AG04450 (cell line): ENCODE measurements at regions of chr14 and their contacts with region 1.

Region 1: DNA sequence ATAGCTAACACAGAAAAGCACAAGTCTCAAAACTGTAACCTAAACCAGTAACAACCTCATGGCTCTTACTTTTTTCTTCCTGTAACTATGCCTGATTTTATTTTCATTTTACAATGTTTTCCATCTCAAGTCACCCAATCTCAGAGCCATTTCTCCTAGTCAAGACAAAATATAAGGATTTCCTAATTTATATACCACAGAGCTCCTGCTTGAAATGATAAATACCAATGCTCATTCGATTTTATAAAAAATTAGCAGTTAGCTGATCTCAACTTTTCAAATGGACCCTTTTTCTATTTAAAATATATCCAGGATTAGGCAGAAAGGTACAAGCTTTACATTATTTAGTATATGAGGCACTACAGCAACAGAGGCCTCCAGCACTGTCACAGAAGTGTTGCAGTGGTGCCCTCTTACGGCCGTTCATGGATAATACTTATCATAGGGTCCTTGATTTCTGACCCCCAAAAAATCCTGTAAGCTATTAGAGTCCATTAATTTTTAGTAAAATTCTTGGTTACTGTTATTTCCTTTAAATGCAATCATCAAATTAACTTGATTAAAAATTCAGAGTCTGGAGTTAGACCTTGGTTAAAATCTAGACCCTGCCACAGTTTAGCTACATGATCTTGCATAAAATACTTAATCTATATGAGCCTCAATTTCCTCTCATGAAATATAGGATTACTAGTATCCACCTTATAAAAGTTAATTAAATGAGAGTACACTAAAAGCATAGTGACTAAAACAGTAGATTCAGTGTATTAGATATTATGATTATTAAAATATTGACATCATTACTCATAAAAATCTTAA is 68.3 kb downstream of the SEC23A start:
- DNase-seq: no peak
- H3K4me3 ChIP-seq: no peak overlapping the region
- H3K27ac ChIP-seq: no peak overlapping the region
- H3K27me3 ChIP-seq: no peaks in the 10 kb centered on the region
- CTCF ChIP-seq: peak; percentile 44

Region 2: GRCh38 chr14:38721822-38722431 is 312.8 kb before region 1 on chr14:
- CTCF ChIA-PET with region 1: interaction called, 34 read pairs
- POLR2A ChIA-PET with region 1: no interaction called
- DNase-seq: no peak
- H3K4me3 ChIP-seq: no peak overlapping the region
- H3K27ac ChIP-seq: no peak overlapping the region
- H3K27me3 ChIP-seq: no peaks in the 10 kb centered on the region
- CTCF ChIP-seq: peak; percentile 76

Region 3: DNA sequence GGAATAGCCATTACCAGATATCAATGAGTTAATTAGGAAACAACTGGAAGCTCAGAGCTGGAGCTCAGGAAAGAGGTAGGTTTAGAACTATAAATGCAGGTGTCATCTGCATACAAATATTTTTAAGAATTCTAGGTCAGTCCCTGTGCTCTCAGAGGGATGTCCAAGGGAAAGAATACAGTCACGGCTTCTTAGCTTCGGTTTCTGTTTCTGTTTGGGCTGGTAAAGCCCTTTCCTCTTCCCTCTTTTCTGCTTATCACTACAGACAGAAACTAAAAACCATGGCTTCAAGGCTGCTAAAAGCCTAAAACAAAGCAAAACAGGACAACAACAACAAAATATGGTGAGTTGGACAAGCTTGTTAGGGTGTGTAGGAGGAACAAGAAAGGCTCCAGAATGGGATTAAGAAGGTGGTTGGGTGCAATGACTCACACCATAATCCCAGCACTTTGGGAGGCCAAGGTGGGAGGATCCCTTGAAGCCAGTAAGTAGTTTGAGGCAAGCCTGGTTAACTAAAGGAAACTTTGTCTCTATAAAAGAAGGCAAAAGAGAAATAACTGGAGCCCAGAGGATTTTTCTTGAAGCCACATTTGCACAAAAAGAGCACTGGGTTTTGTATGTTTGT is 44.7 kb before region 1 on chr14:
- CTCF ChIA-PET with region 1: no interaction called
- POLR2A ChIA-PET with region 1: no interaction called
- DNase-seq: no peak
- H3K4me3 ChIP-seq: no peak overlapping the region
- H3K27ac ChIP-seq: no peak overlapping the region
- H3K27me3 ChIP-seq: no peaks in the 10 kb centered on the region
- CTCF ChIP-seq: no peak

Region 4: DNA sequence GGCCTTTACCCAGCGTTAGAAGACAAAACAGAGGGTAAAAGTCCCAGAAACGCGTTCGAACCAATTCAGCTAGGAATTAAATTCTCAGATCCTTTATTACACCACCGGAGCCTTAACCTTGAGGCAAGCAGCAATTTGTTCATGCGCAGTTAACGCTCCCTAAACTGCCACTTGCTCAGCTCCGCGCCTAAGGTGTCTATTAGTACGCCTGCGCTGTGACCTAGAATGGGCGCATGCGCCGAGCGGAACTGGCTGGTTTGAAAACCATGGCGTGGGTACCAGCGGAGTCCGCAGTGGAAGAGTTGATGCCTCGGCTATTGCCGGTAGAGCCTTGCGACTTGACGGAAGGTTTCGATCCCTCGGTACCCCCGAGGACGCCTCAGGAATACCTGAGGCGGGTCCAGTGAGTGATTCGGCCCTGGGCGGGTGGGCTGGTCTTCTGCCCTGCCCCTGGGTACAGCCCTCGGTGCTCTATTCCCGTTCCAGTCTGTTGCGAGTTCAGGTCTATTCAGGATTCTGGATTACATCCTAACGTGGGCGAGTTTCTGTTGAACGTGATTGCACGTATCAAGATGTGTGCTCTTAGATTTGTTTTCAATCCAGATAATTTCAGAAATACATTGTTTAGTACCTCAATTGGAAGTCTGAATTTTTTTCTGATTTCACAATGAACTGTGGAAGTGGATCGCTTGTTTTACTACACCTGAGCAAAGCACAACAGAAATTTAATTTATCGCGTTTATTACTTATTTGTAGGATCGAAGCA is 79.6 kb after region 1 on chr14 and contains the start of gene GEMIN2:
- CTCF ChIA-PET with region 1: no interaction called
- POLR2A ChIA-PET with region 1: no interaction called
- DNase-seq: peak; percentile 84
- H3K4me3 ChIP-seq: peak within 1 kb of the TSS; percentile 74
- H3K27ac ChIP-seq: no peak within 1 kb of the TSS
- H3K27me3 ChIP-seq: no peaks in the 10 kb centered on the region
- CTCF ChIP-seq: no peak
- polyA plus RNA-seq, gene GEMIN2: 9.7 and 15.4 TPM in 2 replicates